A549 (cell line): ENCODE measurements at regions of chrX and their contacts with region 1.

Region 1: DNA sequence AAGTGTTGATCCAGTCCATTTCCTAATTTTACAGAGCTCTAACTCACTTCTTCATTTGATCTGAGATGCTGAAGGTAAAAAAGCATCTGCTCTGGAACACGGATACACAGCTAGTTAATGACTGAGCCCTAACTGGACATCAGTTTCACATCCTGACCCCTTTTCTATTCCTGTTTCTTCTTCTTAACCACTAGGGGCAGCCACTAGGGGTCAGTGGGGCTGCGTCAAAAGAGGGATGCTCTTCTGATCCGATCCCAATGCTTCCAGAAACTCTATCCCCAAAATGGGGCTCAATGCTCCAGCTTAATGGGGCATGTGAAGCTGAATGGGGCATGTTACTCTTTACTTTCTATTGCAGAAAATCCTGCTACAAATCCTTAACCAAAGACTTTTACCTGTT is 33.4 kb upstream of the PHKA2 start:
- DNase-seq: peak; percentile 55 to 61
- ATAC-seq: peak; percentile 83 to 93; a peak in 5 of 6 replicates
- H3K4me3 ChIP-seq: no peak overlapping the region
- H3K27ac ChIP-seq: peak overlapping the region in 1 of 2 experiments; percentile 41; a peak in 1 of 6 replicates
- H3K4me1 ChIP-seq: peaks cover 5% of the 10 kb centered on the region; the same call in 1 of the 3 replicates
- CTCF ChIP-seq: peak; percentile 80
- EP300 ChIP-seq: no peak
- POLR2A ChIP-seq: no peak
- RAD21 ChIP-seq: peak; percentile 88 to 90

Region 2: GRCh38 chrX:19005910-19006309 is 11.4 kb before region 1 on chrX:
- CTCF ChIA-PET with region 1: interaction called, 17 read pairs
- POLR2A ChIA-PET with region 1: no interaction called
- DNase-seq: peak in 1 of 2 experiments; percentile 33
- ATAC-seq: peak; percentile 65 to 70; a peak in 3 of 6 replicates
- H3K4me3 ChIP-seq: no peak overlapping the region
- H3K27ac ChIP-seq: no peak overlapping the region
- H3K4me1 ChIP-seq: no peaks in the 10 kb centered on the region
- CTCF ChIP-seq: peak; percentile 23; the same call in 2 of the 3 replicates
- EP300 ChIP-seq: no peak
- POLR2A ChIP-seq: no peak
- RAD21 ChIP-seq: peak; percentile 40 to 56; a peak in 4 of 5 replicates

Region 3: GRCh38 chrX:19030805-19031204 is 13.5 kb after region 1 on chrX:
- CTCF ChIA-PET with region 1: interaction called, 12 read pairs
- POLR2A ChIA-PET with region 1: no interaction called
- DNase-seq: peak in 1 of 2 experiments; percentile 38
- ATAC-seq: peak in 1 of 2 experiments; percentile 44; a peak in 3 of 6 replicates
- H3K4me3 ChIP-seq: no peak overlapping the region
- H3K27ac ChIP-seq: no peak overlapping the region
- H3K4me1 ChIP-seq: peaks cover 15% of the 10 kb centered on the region; the same call in 1 of the 3 replicates
- CTCF ChIP-seq: no peak
- EP300 ChIP-seq: no peak
- POLR2A ChIP-seq: no peak
- RAD21 ChIP-seq: no peak

Region 4: DNA sequence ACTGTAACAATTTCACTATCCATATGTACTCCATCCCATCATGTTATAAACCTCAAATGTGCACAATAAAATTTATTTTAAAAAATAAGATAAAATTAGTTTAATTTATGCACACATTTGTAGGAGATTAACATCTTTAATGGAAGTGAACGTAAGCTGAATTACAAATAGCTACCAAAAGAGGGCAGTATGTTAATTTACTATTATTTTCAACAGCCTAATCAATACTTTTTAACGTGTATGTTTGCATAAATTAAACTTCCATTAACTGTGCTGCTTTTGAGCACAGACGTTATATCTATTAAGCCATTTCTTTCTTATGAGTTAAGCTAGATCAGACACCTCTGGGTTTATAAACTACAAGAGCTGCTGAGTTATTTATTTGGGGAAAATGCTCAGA is 23.1 kb after region 1 on chrX:
- CTCF ChIA-PET with region 1: interaction called, 20 read pairs
- POLR2A ChIA-PET with region 1: no interaction called
- DNase-seq: no peak
- ATAC-seq: no peak
- H3K4me3 ChIP-seq: no peak overlapping the region
- H3K27ac ChIP-seq: no peak overlapping the region
- H3K4me1 ChIP-seq: peaks cover 2% of the 10 kb centered on the region
- CTCF ChIP-seq: peak; percentile 63
- EP300 ChIP-seq: no peak
- POLR2A ChIP-seq: no peak
- RAD21 ChIP-seq: peak; percentile 62 to 73

Region 5: GRCh38 chrX:19225924-19226323 is 208.7 kb after region 1 on chrX:
- CTCF ChIA-PET with region 1: interaction called, 10 read pairs
- POLR2A ChIA-PET with region 1: no interaction called
- DNase-seq: peak; percentile 13 to 69
- ATAC-seq: peak; percentile 62 to 79
- H3K4me3 ChIP-seq: no peak overlapping the region
- H3K27ac ChIP-seq: peak overlapping the region in 1 of 2 experiments; percentile 4; a peak in 1 of 6 replicates
- H3K4me1 ChIP-seq: no peaks in the 10 kb centered on the region
- CTCF ChIP-seq: peak; percentile 45
- EP300 ChIP-seq: no peak
- POLR2A ChIP-seq: no peak
- RAD21 ChIP-seq: peak; percentile 68